ENCODE measurements at regions of chr3 and their contacts with region 1.

Region 1: DNA sequence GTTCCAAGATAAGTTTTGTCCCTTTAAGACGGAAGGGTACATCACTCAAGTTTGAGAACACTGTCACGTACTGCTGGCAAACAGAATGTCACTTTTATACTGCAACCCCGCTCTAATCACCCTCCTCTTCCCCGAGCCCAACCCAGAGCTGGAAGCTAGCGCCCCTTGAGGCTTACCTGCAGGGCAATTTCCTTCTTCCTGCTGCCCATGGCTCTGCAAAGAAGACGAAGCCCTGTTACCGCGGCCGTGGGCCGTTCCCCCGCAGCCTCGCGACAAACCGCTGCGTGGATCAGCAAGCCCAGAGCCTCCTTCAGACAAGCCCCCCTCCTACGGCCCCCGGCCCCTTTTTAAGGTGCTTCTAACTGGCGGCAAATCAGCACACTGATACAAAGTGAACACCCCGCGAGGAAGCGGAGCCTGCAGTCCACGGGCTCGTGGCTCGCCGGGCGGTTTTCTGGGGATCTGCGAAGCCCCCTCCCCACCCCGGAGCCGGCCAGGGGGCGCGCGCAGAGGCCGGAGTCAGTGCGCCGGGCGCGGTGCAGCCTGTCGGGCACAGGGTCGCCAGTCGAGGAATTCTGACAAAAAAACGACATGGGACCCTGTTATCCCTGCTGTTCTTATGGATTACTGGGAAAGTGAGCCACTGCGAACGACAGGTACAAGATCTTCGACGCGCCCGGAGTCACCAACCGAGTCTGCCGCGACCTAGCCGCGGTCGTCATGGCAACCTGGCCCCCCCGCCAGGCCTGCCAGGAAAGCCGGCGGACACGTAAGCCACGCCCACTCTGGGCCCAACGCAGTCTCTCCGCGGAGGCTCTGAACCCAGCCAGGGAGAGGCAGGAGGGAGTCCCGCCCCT is at the start of gene NME9:
- DNase-seq: peak; percentile 93
- ATAC-seq: peak; percentile 90
- H3K4me3 Mint-ChIP-seq: peak within 1 kb of the TSS; percentile 76
- H3K27ac Mint-ChIP-seq: peak within 1 kb of the TSS; percentile 84
- H3K4me1 Mint-ChIP-seq: peaks cover 30% of the 10 kb centered on the region
- H3K27me3 Mint-ChIP-seq: no peaks in the 10 kb centered on the region
- total RNA-seq, gene NME9: 0.46 to 0.65 TPM

Region 2: GRCh38 chr3:138136201-138136600 is 193.2 kb before region 1 on chr3:
- CTCF ChIA-PET with region 1: no interaction called
- POLR2A ChIA-PET with region 1: no interaction called
- intact Hi-C with region 1: no loop called
- DNase-seq: no peak
- ATAC-seq: no peak
- H3K4me3 Mint-ChIP-seq: no peak overlapping the region
- H3K27ac Mint-ChIP-seq: no peak overlapping the region
- H3K4me1 Mint-ChIP-seq: no peaks in the 10 kb centered on the region
- H3K27me3 Mint-ChIP-seq: peaks cover 9% of the 10 kb centered on the region

Region 3: DNA sequence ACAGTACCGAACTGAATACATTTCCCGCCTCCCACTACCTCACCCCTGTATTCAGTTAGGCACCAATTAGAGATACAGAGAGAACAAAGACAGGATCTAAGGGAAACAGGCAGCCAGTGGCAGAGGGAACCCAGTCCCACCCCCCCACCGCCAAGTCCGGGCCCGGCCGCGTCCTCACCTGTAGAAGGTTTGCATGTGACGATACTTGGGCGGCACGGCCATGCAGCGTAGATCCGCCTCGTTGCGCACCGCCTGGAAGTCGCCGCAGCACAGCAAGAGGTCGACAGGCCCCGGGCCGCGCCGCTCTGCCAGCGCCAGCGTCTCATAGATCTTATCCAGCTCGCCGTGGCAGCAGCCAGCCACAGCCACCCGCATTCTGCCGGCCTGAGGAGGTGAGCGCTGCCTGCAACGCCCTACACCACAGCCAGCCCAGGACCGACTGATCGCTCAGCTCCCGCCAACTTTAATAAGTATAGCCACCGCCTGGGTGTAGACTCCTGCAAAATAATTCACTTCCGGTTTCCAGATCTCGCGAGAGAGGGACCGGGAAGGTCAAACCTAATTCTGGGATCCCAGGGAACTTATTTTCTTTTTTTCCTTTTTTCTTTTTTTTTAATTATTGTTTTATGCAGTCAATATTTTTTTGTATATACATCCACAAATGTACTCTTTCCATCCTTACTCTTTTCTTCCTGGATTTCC is 154.8 kb before region 1 on chr3 and contains the start of gene DBR1:
- CTCF ChIA-PET with region 1: interaction called, 9 read pairs
- POLR2A ChIA-PET with region 1: no interaction called
- intact Hi-C with region 1: loop called in 1 of 2 experiments (anchors 2 kb)
- DNase-seq: peak; percentile 85
- ATAC-seq: peak; percentile 85
- H3K4me3 Mint-ChIP-seq: peak within 1 kb of the TSS; percentile 89
- H3K27ac Mint-ChIP-seq: peak within 1 kb of the TSS; percentile 96
- H3K4me1 Mint-ChIP-seq: peaks cover 30% of the 10 kb centered on the region
- H3K27me3 Mint-ChIP-seq: no peaks in the 10 kb centered on the region
- total RNA-seq, gene DBR1: 16.4 to 22.0 TPM

Region 4: GRCh38 chr3:138296639-138297038 is 32.7 kb before region 1 on chr3:
- CTCF ChIA-PET with region 1: interaction called, 5 read pairs
- POLR2A ChIA-PET with region 1: no interaction called
- intact Hi-C with region 1: loop called (anchors 1 to 2 kb)
- DNase-seq: peak; percentile 65
- ATAC-seq: peak; percentile 92
- H3K4me3 Mint-ChIP-seq: peak overlapping the region; percentile 34
- H3K27ac Mint-ChIP-seq: peak overlapping the region; percentile 88
- H3K4me1 Mint-ChIP-seq: peaks cover 27% of the 10 kb centered on the region
- H3K27me3 Mint-ChIP-seq: no peaks in the 10 kb centered on the region

Region 5: GRCh38 chr3:138314751-138315150 is 14.6 kb before region 1 on chr3:
- CTCF ChIA-PET with region 1: interaction called, 4 read pairs
- POLR2A ChIA-PET with region 1: no interaction called
- intact Hi-C with region 1: loop called in 1 of 2 experiments (anchors 1 kb)
- DNase-seq: no peak
- ATAC-seq: no peak
- H3K4me3 Mint-ChIP-seq: no peak overlapping the region
- H3K27ac Mint-ChIP-seq: no peak overlapping the region
- H3K4me1 Mint-ChIP-seq: peaks cover 2% of the 10 kb centered on the region
- H3K27me3 Mint-ChIP-seq: no peaks in the 10 kb centered on the region

Region 6: GRCh38 chr3:138625707-138626365 is 296.5 kb after region 1 on chr3:
- CTCF ChIA-PET with region 1: no interaction called
- POLR2A ChIA-PET with region 1: no interaction called
- intact Hi-C with region 1: no loop called
- DNase-seq: no peak
- ATAC-seq: no peak
- H3K4me3 Mint-ChIP-seq: no peak overlapping the region
- H3K27ac Mint-ChIP-seq: no peak overlapping the region
- H3K4me1 Mint-ChIP-seq: peaks cover 3% of the 10 kb centered on the region
- H3K27me3 Mint-ChIP-seq: no peaks in the 10 kb centered on the region

Measured in activated CD4-positive, alpha-beta T cell treated with anti-CD3 and anti-CD28 coated beads for 36 hours (primary cell).